Activated T-helper 1 cell treated with anti-CD3 and anti-CD28 coated beads, Interleukin-12 subunit alpha, Interleukin-12 subunit beta, Interleukin-2, Interleukin-4 antibody, amounts not matched to agents 30 ng/mL and 10 ng/mL and 1 ng/mL, durations not matched to agents 14 hours and 24 hours and 36 hours (primary cell): ENCODE measurements at regions of chr1 and their contacts with region 1.

Region 1: GRCh38 chr1:235160957-235161684 is at the start of gene RBM34:
- DNase-seq: peak; percentile 92
- H3K4me3 Mint-ChIP-seq: peak within 1 kb of the TSS; percentile 98
- H3K27ac Mint-ChIP-seq: peak within 1 kb of the TSS; percentile 97
- H3K4me1 Mint-ChIP-seq: peaks cover 16% of the 10 kb centered on the region
- H3K27me3 Mint-ChIP-seq: no peaks in the 10 kb centered on the region
- total RNA-seq, gene RBM34: 120 and 127 TPM in 2 replicates

Region 2: GRCh38 chr1:234478481-234479309 is 682.4 kb before region 1 on chr1 and contains the start of gene TARBP1:
- intact Hi-C with region 1: loop called (anchors 2 kb)
- DNase-seq: peak; percentile 76
- H3K4me3 Mint-ChIP-seq: peak within 1 kb of the TSS; percentile 90
- H3K27ac Mint-ChIP-seq: peak within 1 kb of the TSS; percentile 75
- H3K4me1 Mint-ChIP-seq: peaks cover 47% of the 10 kb centered on the region
- H3K27me3 Mint-ChIP-seq: peaks cover 17% of the 10 kb centered on the region
- total RNA-seq, gene TARBP1: 71.7 and 78.9 TPM in 2 replicates

Region 3: GRCh38 chr1:235105051-235106043 is 55.8 kb before region 1 on chr1:
- intact Hi-C with region 1: loop called (anchors 1 kb)
- DNase-seq: peak; percentile 26
- H3K4me3 Mint-ChIP-seq: peak overlapping the region; percentile 81
- H3K27ac Mint-ChIP-seq: peak overlapping the region; percentile 85
- H3K4me1 Mint-ChIP-seq: peaks cover 48% of the 10 kb centered on the region
- H3K27me3 Mint-ChIP-seq: no peaks in the 10 kb centered on the region

Region 4: GRCh38 chr1:235128456-235129328 is 32.4 kb before region 1 on chr1 and contains the start of gene TOMM20:
- intact Hi-C with region 1: loop called (anchors 1 kb)
- DNase-seq: peak; percentile 94
- H3K4me3 Mint-ChIP-seq: peak within 1 kb of the TSS; percentile 99
- H3K27ac Mint-ChIP-seq: peak within 1 kb of the TSS; percentile 94
- H3K4me1 Mint-ChIP-seq: peaks cover 45% of the 10 kb centered on the region
- H3K27me3 Mint-ChIP-seq: no peaks in the 10 kb centered on the region
- total RNA-seq, gene TOMM20: 112 and 137 TPM in 2 replicates

Region 5: DNA sequence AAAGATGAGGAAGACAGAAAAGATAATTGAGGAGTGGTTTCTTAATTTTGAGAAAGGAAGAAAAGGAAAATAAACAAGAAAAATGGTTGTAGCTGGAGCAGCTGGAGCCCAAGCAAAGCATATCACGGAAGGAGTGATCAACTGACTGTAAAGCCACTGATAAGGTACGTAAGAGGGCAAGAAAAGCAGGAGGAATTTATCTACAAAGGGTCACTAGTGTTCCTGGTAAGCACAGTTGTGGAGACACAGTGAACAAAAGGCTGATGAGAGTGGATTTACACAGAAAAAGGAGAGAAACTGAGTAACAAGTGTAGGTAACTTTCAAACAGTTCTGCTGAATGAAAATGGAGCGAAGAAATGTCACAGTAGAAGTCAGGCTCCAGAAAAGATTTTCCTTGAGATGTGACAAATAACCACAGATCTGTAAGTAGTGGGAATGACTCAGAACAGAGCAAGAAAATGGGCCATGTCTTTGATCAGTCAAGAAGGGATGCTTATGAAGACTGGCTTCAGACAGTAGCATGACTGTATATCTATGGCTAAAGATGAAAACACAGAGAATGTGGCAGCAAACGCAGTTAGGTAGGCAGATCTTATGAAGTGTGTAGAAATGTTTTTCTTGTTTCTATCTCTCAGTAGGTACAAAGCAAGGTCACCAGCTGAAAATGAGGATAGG is 45.5 kb after region 1 on chr1:
- intact Hi-C with region 1: loop called (anchors 2 kb)
- DNase-seq: no peak
- H3K4me3 Mint-ChIP-seq: peak overlapping the region; percentile 17
- H3K27ac Mint-ChIP-seq: peak overlapping the region; percentile 87
- H3K4me1 Mint-ChIP-seq: peaks cover 23% of the 10 kb centered on the region
- H3K27me3 Mint-ChIP-seq: no peaks in the 10 kb centered on the region

Region 6: DNA sequence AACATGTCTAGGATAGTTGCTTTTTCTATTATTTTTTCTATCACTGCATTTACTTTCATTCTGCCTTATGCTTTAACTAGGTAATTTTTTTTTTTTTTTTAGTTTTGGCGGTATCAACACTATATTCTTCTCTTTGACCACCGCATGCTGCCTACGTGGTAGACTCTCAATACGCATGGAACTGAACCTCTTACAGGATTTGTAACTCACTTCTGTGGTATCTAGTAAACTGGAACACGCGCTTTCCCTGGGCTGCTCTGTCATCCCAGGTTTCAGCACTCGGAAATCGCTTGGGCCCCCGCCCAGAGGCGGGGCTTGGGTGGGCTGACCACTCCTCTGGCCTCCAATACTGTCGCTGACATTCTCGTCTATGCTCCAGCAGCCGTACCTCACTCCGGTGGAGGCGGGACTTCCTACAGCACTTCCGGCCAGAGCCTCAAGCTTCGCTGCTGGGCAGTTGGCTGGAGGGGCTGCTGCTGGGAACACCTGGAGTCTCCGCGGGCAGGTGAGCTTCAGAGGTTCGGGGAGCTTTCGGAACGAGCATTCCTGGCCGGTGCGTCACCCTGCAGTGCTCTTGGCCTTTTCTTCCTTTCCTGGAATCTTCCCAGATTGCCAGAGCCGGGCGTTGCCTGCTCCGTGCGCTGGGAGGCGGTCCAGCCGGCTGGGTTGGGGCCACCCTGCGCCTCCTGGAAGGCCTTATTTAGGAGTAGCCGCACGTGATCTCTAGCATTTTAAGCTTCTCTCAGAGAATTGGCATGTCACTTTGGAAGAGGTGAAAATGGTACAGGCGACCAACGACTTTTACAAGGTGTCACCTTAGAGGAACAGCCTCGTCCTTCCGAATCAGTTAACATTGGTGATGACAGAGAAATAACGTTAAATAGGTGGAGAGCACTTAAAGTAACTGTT is 206.1 kb after region 1 on chr1 and contains the start of gene TBCE:
- intact Hi-C with region 1: loop called (anchors 1 kb)
- DNase-seq: peak; percentile 87
- H3K4me3 Mint-ChIP-seq: peak within 1 kb of the TSS; percentile 95
- H3K27ac Mint-ChIP-seq: peak within 1 kb of the TSS; percentile 93
- H3K4me1 Mint-ChIP-seq: peaks cover 34% of the 10 kb centered on the region
- H3K27me3 Mint-ChIP-seq: no peaks in the 10 kb centered on the region
- total RNA-seq, gene TBCE: 29.0 and 29.2 TPM in 2 replicates